ENCODE measurements at regions of chr2 and their contacts with region 1.

Region 1: DNA sequence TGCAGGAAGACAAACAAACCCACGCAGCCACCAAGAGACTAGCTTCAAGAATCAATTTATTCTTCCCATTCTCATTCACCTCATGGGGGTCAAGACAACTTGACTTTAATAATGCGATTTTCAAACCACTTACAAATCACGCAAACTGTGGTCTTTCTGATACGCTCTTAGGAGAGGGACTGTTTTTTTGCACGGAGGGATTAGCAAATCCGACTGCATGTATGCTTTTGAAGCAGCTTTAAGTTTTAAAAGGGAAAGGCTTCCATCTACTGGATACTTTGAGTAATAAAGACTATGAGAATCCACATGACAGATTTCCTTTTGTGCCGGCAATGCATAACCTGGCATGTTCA is 322.9 kb upstream of the KCNJ3 start:
- DNase-seq: peak; percentile 28
- H3K4me3 ChIP-seq: no peak overlapping the region
- H3K27ac ChIP-seq: no peak overlapping the region
- H3K4me1 ChIP-seq: no peaks in the 10 kb centered on the region
- H3K27me3 ChIP-seq: no peaks in the 10 kb centered on the region
- CTCF ChIP-seq: peak; percentile 31 to 52

Region 2: GRCh38 chr2:153871231-153872221 is 504.0 kb before region 1 on chr2 and contains the start of gene GALNT13:
- CTCF ChIA-PET with region 1: no interaction called
- dilution Hi-C with region 1: no loop called
- in situ Hi-C with region 1: no loop called
- intact Hi-C with region 1: loop called (anchors 5 kb)
- DNase-seq: peak; percentile 22
- H3K4me3 ChIP-seq: no peak within 1 kb of the TSS
- H3K27ac ChIP-seq: no peak within 1 kb of the TSS
- H3K4me1 ChIP-seq: no peaks in the 10 kb centered on the region
- H3K27me3 ChIP-seq: peaks cover 35% of the 10 kb centered on the region
- CTCF ChIP-seq: no peak
- total RNA-seq, gene GALNT13: 0.17 TPM in 1 of 2 donors, not detected in the other

Region 3: DNA sequence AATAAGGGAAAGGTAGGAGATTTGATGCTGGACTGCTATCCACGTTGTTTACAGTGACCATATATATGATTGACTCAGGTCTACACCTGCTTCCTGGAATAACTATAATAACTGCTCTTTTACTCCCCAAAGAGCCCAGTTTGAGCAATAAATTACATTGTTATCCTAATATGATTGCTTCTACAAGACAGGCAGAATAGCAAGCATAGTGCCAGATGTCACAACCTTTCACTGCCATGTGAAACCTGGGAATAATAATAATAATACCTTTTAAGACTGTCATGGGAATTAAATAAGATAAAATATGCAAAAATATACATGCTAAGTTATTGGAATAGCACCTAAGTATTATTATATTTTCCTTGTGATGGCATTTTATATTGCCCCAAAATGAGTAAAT is 205.2 kb before region 1 on chr2:
- CTCF ChIA-PET with region 1: no interaction called
- dilution Hi-C with region 1: no loop called
- in situ Hi-C with region 1: no loop called
- intact Hi-C with region 1: no loop called
- DNase-seq: no peak
- H3K4me3 ChIP-seq: no peak overlapping the region
- H3K27ac ChIP-seq: no peak overlapping the region
- H3K4me1 ChIP-seq: no peaks in the 10 kb centered on the region
- H3K27me3 ChIP-seq: no peaks in the 10 kb centered on the region
- CTCF ChIP-seq: no peak

Region 4: DNA sequence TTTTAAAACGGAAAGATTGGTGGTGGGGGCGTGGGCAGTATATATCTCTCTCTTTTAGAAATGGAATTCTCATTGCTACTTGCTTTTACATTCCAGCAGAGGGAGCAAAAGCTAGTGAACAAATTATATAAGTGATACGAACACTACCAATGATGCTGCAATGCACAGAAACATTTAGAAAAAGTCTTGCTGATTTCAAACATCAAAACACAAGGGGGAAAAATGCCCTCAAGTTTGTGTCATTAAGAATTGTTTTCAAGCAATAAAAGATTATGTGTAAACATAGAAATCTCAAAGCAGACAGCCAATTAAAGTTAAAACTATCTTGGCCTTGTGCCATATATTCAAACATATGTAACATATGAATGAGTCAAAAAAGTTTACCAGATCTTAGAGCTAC is 26.7 kb after region 1 on chr2:
- CTCF ChIA-PET with region 1: no interaction called
- dilution Hi-C with region 1: no loop called
- in situ Hi-C with region 1: no loop called
- intact Hi-C with region 1: no loop called
- DNase-seq: peak; percentile 20
- H3K4me3 ChIP-seq: no peak overlapping the region
- H3K27ac ChIP-seq: no peak overlapping the region
- H3K4me1 ChIP-seq: no peaks in the 10 kb centered on the region
- H3K27me3 ChIP-seq: no peaks in the 10 kb centered on the region
- CTCF ChIP-seq: peak; percentile 51 to 54

Measured in mammary epithelial cell (primary cell).